Testis (tissue), 5 donors: ENCODE measurements at regions of chr11 and their contacts with region 1.

Region 1: GRCh38 chr11:73393479-73394380 is 17.5 kb downstream of the RELT start:
- DNase-seq: peak; percentile 86
- H3K4me3 ChIP-seq: no peak overlapping the region
- H3K27ac ChIP-seq: no peak overlapping the region
- H3K4me1 ChIP-seq: no peaks in the 10 kb centered on the region
- H3K27me3 ChIP-seq: no peaks in the 10 kb centered on the region
- CTCF ChIP-seq: peak; percentile 64 to 68 (median 65)
- POLR2A ChIP-seq: no peak

Region 2: DNA sequence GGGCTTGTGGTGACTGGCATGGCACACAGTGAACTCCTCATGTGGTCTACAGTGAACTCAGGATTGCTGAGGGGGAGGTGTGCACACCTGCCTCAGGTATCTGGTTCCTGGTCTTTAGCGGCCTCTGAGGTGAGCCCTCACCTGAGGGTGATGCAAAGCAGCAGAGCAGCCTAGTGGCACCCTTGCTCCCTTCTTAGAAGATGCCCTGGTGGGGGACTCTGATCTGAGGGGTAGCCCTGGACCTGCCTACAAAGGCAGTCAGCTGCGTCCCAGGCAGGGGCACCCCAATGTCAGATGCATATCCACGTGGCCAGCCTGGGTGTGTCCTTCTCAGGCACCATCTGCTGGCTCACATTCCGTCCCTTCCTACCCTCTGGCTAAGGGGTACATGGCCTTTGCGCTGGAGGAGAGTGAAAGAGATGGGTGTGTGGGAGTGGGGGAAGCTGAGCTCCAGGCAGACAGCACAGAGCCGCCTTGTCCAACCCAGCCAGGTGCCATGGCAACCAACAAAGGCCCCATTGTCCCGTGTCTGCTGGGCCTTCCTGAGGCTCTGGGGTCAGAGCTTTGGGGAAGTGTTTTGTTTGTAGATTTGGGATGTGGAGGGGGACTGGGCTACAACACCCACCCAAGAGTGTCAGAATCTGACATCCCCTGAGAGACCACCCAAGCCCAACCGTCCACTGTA is 258.5 kb after region 1 on chr11:
- intact Hi-C with region 1: loop called (anchors 10 kb)
- DNase-seq: peak; percentile 91
- H3K4me3 ChIP-seq: no peak overlapping the region
- H3K27ac ChIP-seq: peak overlapping the region in 1 of 2 donors; percentile 55
- H3K4me1 ChIP-seq: peaks cover 14% of the 10 kb centered on the region
- H3K27me3 ChIP-seq: no peaks in the 10 kb centered on the region
- CTCF ChIP-seq: no peak
- POLR2A ChIP-seq: no peak